ENCODE measurements at regions of chr2 and their contacts with region 1.

Region 1: GRCh38 chr2:154439156-154439555 is 259.3 kb upstream of the KCNJ3 start:
- DNase-seq: no peak
- H3K4me3 ChIP-seq: no peak overlapping the region
- H3K27ac ChIP-seq: no peak overlapping the region
- H3K4me1 ChIP-seq: no peaks in the 10 kb centered on the region
- H3K27me3 ChIP-seq: no peaks in the 10 kb centered on the region
- CTCF ChIP-seq: no peak; the same call in 1 of the 2 replicates

Region 2: DNA sequence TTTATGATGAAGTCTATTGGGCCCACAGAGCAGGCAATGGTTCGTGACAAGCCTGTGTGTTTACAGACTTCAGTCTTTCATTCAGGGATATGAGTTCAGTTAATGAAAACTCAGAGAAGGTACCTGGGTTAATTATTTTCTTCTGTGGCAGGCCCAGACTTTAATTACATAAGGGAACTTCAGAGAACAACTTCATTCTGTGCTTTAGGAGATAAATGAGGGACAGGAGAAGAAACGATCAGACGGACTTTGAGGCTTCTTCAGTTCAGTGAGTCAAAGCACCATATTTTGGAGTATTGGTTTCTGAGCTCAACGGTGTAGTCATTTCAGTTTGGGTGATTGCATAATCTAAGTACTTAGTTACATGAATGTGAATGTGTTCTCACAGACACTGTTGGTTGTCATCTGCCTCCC is 56.3 kb after region 1 on chr2:
- CTCF ChIA-PET with region 1: interaction called, 14 read pairs
- POLR2A ChIA-PET with region 1: no interaction called
- intact Hi-C with region 1: no loop called
- DNase-seq: no peak
- H3K4me3 ChIP-seq: no peak overlapping the region
- H3K27ac ChIP-seq: no peak overlapping the region
- H3K4me1 ChIP-seq: no peaks in the 10 kb centered on the region
- H3K27me3 ChIP-seq: no peaks in the 10 kb centered on the region
- CTCF ChIP-seq: no peak